CD8-positive, alpha-beta memory T cell (primary cell): ENCODE measurements at regions of chr4 and their contacts with region 1.

Region 1: DNA sequence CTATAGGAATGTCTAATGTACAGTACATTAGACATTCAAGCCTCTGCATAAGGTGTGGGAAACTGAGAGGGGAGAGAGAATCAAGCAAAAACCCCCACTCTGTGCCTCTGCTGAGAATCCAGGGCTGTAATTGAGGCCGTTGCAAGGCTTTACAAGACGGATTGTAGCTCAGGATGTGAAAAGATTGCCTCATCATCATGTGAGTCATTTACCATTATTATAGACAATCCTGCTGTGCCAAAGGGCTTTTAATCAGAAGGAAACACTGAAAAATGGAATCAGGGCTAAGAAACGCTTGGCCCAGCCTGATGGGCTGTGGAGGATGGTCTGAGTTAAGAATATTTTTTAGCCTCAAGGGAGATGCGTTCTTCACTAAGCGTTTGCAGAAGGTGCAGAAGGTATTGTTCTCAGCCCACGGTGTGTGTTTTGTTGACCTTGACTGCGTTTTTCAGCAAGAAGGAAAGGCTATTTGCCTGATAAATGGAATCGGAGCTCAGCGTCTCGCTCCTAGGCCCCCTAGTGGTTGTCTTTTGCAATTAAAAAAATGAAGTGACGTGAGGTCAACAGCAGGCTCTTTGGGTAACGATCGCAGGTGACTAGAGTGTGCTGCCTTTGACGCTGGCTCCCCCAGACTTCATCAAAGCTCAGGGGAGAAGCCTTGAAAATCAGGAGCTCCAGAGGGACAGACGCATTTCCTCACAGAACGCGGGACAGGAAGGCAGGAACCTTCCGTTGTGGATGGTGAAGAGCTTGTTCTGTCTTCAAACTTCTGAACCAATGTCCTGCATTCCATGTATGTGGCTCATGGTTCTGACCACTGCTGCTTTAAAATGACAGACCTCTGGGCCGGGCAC is 18.1 kb upstream of the CHRNA9 start:
- DNase-seq: peak; percentile 37 to 79 (median 70)
- H3K4me3 ChIP-seq: peak overlapping the region; percentile 73
- H3K4me3 Mint-ChIP-seq: peak overlapping the region; percentile 58 to 86 (median 79)
- H3K27ac ChIP-seq: peak overlapping the region; percentile 77
- H3K27ac Mint-ChIP-seq: peak overlapping the region; percentile 69 to 97 (median 94)
- H3K4me1 ChIP-seq: peaks cover 28% of the 10 kb centered on the region
- H3K4me1 Mint-ChIP-seq: peaks cover 22 to 40% (median 22%) of the 10 kb centered on the region in 3 donors
- H3K27me3 ChIP-seq: no peaks in the 10 kb centered on the region
- H3K27me3 Mint-ChIP-seq: no peaks in the 10 kb centered on the region

Region 2: GRCh38 chr4:40112027-40112792 is 204.8 kb before region 1 on chr4:
- CTCF ChIA-PET with region 1: no interaction called
- POLR2A ChIA-PET with region 1: no interaction called
- DNase-seq: no peak
- H3K4me3 ChIP-seq: no peak overlapping the region
- H3K4me3 Mint-ChIP-seq: no peak overlapping the region
- H3K27ac ChIP-seq: no peak overlapping the region
- H3K27ac Mint-ChIP-seq: no peak overlapping the region
- H3K4me1 ChIP-seq: no peaks in the 10 kb centered on the region
- H3K4me1 Mint-ChIP-seq: no peaks in the 10 kb centered on the region
- H3K27me3 ChIP-seq: no peaks in the 10 kb centered on the region
- H3K27me3 Mint-ChIP-seq: no peaks in the 10 kb centered on the region

Region 3: GRCh38 chr4:40149960-40150385 is 167.0 kb before region 1 on chr4:
- CTCF ChIA-PET with region 1: interaction called, 39 read pairs
- POLR2A ChIA-PET with region 1: interaction called, 5 read pairs
- DNase-seq: peak; percentile 51 to 79 (median 70)
- H3K4me3 ChIP-seq: no peak overlapping the region
- H3K4me3 Mint-ChIP-seq: no peak overlapping the region
- H3K27ac ChIP-seq: no peak overlapping the region
- H3K27ac Mint-ChIP-seq: peak overlapping the region; percentile 33 to 90 (median 60)
- H3K4me1 ChIP-seq: peaks cover 20% of the 10 kb centered on the region
- H3K4me1 Mint-ChIP-seq: peaks cover 22 to 37% (median 34%) of the 10 kb centered on the region in 3 donors
- H3K27me3 ChIP-seq: no peaks in the 10 kb centered on the region
- H3K27me3 Mint-ChIP-seq: no peaks in the 10 kb centered on the region

Region 4: DNA sequence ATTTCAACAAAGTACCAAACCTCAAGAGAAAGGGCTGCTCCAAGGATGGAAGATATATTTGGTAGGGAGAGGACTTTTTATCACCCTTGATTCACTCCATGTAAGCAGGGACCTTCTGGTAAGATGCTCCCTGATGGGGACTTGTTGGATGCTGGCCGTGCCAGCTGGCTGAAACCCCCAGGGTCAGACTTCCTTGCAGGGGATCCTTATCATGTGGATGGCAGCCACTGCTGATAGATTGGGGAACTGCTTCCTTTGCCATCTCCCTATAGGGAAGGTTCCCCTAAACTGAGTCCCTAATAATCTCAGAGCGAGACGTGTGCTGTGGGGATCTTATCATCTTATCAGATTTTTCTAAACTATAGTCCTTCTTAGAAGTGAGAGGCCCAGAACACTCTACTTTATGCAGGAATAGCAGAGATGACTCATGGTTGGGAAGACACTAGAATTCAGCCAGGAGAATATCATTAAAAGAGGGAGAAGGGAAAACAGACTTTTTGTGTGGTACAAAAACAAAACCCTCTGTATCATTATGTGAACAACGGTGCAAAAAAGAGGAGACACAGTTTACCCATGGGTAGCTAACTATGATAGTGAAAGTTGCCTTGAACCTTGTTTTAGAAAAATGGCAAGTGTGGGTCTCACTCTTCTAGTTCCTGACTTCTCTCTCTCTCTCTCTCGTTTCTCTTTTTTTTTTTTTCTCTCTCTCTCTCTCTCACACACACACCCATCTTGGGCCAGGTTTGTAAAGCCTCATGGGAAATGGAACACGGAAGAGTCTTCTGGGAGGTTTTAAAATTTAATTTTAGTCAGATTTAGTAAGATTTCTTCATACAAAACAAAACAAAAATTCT is 104.1 kb before region 1 on chr4:
- CTCF ChIA-PET with region 1: interaction called, 13 read pairs
- POLR2A ChIA-PET with region 1: no interaction called
- DNase-seq: no peak
- H3K4me3 ChIP-seq: peak overlapping the region; percentile 21
- H3K4me3 Mint-ChIP-seq: peak overlapping the region; percentile 51 to 93 (median 78)
- H3K27ac ChIP-seq: no peak overlapping the region
- H3K27ac Mint-ChIP-seq: peak overlapping the region; percentile 85 to 97 (median 90)
- H3K4me1 ChIP-seq: peaks cover 93% of the 10 kb centered on the region
- H3K4me1 Mint-ChIP-seq: peaks cover 90 to 97% (median 94%) of the 10 kb centered on the region in 3 donors
- H3K27me3 ChIP-seq: no peaks in the 10 kb centered on the region
- H3K27me3 Mint-ChIP-seq: peaks cover 0 to 3% of the 10 kb centered on the region in 2 donors

Region 5: DNA sequence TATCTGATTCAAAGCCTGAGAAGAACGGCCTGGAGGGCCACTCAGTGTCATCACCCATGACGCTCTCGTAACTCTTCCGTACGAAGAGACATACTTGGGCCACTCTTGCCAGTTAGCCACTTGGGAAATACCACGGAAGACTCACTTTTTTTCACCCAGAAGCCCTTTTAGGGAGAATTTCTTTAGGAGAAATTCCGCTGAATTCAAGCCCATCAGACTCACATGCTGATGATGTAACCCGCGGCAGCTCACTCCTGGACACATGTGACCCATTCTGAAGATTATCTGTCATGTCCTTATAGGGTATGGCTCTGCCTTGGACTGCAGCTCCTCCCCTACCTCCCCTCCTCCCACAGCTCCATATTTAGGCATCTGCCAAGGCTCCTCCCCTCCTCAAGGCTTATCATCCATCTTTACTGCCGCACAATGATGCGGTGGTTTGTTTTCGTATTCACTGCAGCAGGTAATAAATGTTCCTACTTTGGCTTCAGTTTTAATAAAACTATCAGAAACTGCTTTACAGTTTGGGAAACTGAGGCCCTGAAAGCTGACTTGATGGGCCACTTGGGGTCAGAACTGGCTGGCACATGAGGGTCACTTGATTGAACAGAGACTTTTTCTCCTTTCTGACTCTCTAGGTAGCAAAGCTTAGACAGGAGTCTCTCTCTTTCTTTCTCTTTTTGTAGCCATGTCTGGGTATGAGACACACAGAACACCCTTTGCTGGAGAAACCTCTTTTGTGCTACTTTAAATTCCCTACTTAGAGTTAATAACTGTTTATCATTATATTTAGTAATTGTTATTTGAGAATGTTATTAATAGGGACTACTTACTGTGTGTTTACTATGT is 78.1 kb before region 1 on chr4:
- CTCF ChIA-PET with region 1: interaction called, 56 read pairs
- POLR2A ChIA-PET with region 1: interaction called, 6 read pairs
- DNase-seq: peak; percentile 59 to 93 (median 82)
- H3K4me3 ChIP-seq: peak overlapping the region; percentile 35
- H3K4me3 Mint-ChIP-seq: peak overlapping the region; percentile 70 to 94 (median 81)
- H3K27ac ChIP-seq: peak overlapping the region; percentile 91
- H3K27ac Mint-ChIP-seq: peak overlapping the region; percentile 94 to 100 (median 98)
- H3K4me1 ChIP-seq: peaks cover 96% of the 10 kb centered on the region
- H3K4me1 Mint-ChIP-seq: peaks cover 88 to 96% (median 96%) of the 10 kb centered on the region in 3 donors
- H3K27me3 ChIP-seq: no peaks in the 10 kb centered on the region
- H3K27me3 Mint-ChIP-seq: no peaks in the 10 kb centered on the region

Region 6: GRCh38 chr4:40255393-40256281 is 61.4 kb before region 1 on chr4:
- CTCF ChIA-PET with region 1: interaction called, 13 read pairs
- POLR2A ChIA-PET with region 1: no interaction called
- DNase-seq: no peak
- H3K4me3 ChIP-seq: peak overlapping the region; percentile 1
- H3K4me3 Mint-ChIP-seq: peak overlapping the region in 5 of 7 donors; percentile 3 to 67 (median 55)
- H3K27ac ChIP-seq: no peak overlapping the region
- H3K27ac Mint-ChIP-seq: peak overlapping the region; percentile 48 to 94 (median 82)
- H3K4me1 ChIP-seq: peaks cover 71% of the 10 kb centered on the region
- H3K4me1 Mint-ChIP-seq: peaks cover 41 to 77% (median 46%) of the 10 kb centered on the region in 3 donors
- H3K27me3 ChIP-seq: no peaks in the 10 kb centered on the region
- H3K27me3 Mint-ChIP-seq: no peaks in the 10 kb centered on the region

Region 7: GRCh38 chr4:40289366-40290188 is 27.4 kb before region 1 on chr4:
- CTCF ChIA-PET with region 1: interaction called, 111 read pairs
- POLR2A ChIA-PET with region 1: interaction called, 6 read pairs
- DNase-seq: peak in 1 of 5 donors; percentile 75
- H3K4me3 ChIP-seq: peak overlapping the region; percentile 22
- H3K4me3 Mint-ChIP-seq: peak overlapping the region in 6 of 7 donors; percentile 2 to 69 (median 52)
- H3K27ac ChIP-seq: no peak overlapping the region
- H3K27ac Mint-ChIP-seq: peak overlapping the region; percentile 57 to 95 (median 90)
- H3K4me1 ChIP-seq: peaks cover 42% of the 10 kb centered on the region
- H3K4me1 Mint-ChIP-seq: peaks cover 35 to 60% (median 44%) of the 10 kb centered on the region in 3 donors
- H3K27me3 ChIP-seq: no peaks in the 10 kb centered on the region
- H3K27me3 Mint-ChIP-seq: no peaks in the 10 kb centered on the region